Sigmoid colon (tissue), 7 donors: ENCODE measurements at regions of chr1 and their contacts with region 1.

Region 1: GRCh38 chr1:20194757-20195461 is 8.6 kb upstream of the PLA2G2C start:
- DNase-seq: peak; percentile 83
- H3K4me3 ChIP-seq: peak overlapping the region in 1 of 4 donors; percentile 8
- H3K27ac ChIP-seq: peak overlapping the region in 3 of 4 donors; percentile 95 to 99 (median 98)
- H3K4me1 ChIP-seq: peaks cover 0 to 59% (median 47%) of the 10 kb centered on the region in 4 donors
- H3K27me3 ChIP-seq: no peaks in the 10 kb centered on the region
- CTCF ChIP-seq: peak; percentile 74 to 83 (median 79)
- EP300 ChIP-seq: no peak
- POLR2A ChIP-seq: no peak

Region 2: DNA sequence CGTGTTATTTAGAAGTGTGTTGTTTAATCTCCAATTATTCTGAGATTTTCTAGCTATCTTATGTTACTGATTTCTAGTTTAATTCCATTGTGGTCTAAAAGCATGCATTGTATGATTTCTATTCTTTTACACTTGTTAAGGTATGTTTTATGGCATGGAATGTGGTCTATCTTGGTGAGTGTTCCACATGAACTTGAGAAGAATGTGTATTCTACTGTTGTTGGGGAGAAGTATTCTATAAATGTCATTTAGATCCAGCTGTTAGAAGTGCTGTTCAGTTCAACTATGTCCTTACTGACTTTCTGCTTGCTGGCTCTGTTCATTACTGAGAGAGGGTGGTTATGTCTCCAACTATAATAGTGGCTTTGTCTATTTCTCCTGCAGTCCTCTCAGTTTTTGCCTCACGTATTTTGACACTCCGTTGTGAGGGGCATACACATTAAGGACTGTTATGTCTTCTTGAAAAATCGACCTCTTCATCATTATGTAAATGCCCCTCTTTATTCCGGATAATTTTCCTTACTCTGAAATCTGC is 137.0 kb before region 1 on chr1:
- intact Hi-C with region 1: no loop called
- DNase-seq: no peak
- H3K4me3 ChIP-seq: no peak overlapping the region
- H3K27ac ChIP-seq: peak overlapping the region in 1 of 4 donors; percentile 18
- H3K4me1 ChIP-seq: peaks cover 0 to 12% (median 8%) of the 10 kb centered on the region in 4 donors
- H3K27me3 ChIP-seq: no peaks in the 10 kb centered on the region
- CTCF ChIP-seq: no peak
- EP300 ChIP-seq: no peak
- POLR2A ChIP-seq: no peak

Region 3: GRCh38 chr1:20087668-20088067 is 107.2 kb before region 1 on chr1:
- intact Hi-C with region 1: no loop called
- DNase-seq: no peak
- H3K4me3 ChIP-seq: no peak overlapping the region
- H3K27ac ChIP-seq: no peak overlapping the region
- H3K4me1 ChIP-seq: peaks cover 0 to 5% (median 0%) of the 10 kb centered on the region in 4 donors
- H3K27me3 ChIP-seq: no peaks in the 10 kb centered on the region
- CTCF ChIP-seq: peak in 1 of 4 experiments; percentile 13
- EP300 ChIP-seq: no peak
- POLR2A ChIP-seq: no peak

Region 4: GRCh38 chr1:20100632-20101355 is 94.1 kb before region 1 on chr1:
- intact Hi-C with region 1: loop called (anchors 2 kb)
- DNase-seq: peak; percentile 70
- H3K4me3 ChIP-seq: no peak overlapping the region
- H3K27ac ChIP-seq: no peak overlapping the region
- H3K4me1 ChIP-seq: peaks cover 0 to 11% (median 2%) of the 10 kb centered on the region in 4 donors
- H3K27me3 ChIP-seq: no peaks in the 10 kb centered on the region
- CTCF ChIP-seq: peak; percentile 86 to 90 (median 88)
- EP300 ChIP-seq: no peak
- POLR2A ChIP-seq: no peak

Region 5: GRCh38 chr1:20165522-20165951 is 29.4 kb before region 1 on chr1:
- intact Hi-C with region 1: loop called (anchors 1 kb)
- DNase-seq: no peak
- H3K4me3 ChIP-seq: no peak overlapping the region
- H3K27ac ChIP-seq: peak overlapping the region in 3 of 4 donors; percentile 79 to 80 (median 80)
- H3K4me1 ChIP-seq: peaks cover 0 to 45% (median 29%) of the 10 kb centered on the region in 4 donors
- H3K27me3 ChIP-seq: no peaks in the 10 kb centered on the region
- CTCF ChIP-seq: peak; percentile 40 to 49 (median 40)
- EP300 ChIP-seq: no peak
- POLR2A ChIP-seq: no peak

Region 6: DNA sequence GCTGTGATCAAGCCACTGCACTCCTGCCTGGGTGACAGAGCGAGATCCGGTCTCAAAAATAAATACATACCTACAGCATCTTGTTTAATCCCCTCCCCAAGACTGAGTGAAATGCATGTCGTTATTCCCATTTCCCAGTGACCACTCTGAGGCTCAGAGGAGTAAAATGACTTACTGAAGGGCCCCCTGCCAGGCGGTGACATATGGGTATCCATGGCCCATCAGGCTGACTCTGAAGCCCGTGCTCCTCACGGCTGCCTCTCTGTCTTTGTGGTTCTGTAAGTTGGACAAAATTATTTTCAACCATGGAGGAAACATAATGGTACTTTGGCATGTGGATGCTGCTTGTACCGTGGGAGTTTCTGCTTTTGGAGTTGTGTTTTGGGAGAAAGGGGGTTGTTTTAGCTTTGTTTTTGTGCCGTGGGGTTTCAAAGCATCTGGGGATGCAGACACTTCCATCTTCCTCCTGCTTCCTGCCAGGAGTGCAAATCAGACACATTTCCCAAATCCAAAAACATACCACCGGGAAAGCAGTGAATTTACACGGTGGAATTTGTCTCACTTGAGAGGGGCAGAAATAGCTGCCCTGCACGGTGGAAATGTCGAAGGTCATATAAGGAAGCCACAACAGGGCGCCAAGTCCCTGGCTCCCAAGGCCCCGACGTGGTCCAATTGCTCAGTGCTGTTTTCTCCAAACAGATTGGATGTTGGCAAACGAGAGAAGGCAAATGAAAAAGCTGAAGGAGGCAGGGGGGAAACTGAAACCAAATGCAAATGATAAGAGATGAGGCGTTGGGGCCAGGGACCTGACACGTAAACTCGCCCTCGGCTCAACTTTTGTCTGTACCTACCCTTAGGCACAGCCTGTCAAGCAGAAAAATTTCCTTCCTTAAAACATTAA is 421.3 kb after region 1 on chr1:
- intact Hi-C with region 1: no loop called
- DNase-seq: no peak
- H3K4me3 ChIP-seq: no peak overlapping the region
- H3K27ac ChIP-seq: peak overlapping the region in 3 of 4 donors; percentile 41 to 50 (median 44)
- H3K4me1 ChIP-seq: peaks cover 0 to 27% (median 15%) of the 10 kb centered on the region in 4 donors
- H3K27me3 ChIP-seq: no peaks in the 10 kb centered on the region
- CTCF ChIP-seq: no peak
- EP300 ChIP-seq: no peak
- POLR2A ChIP-seq: no peak